Activated T-helper 1 cell treated with anti-CD3 and anti-CD28 coated beads, Interleukin-12 subunit alpha, Interleukin-12 subunit beta, Interleukin-2, Interleukin-4 antibody, amounts not matched to agents 30 ng/mL and 10 ng/mL and 1 ng/mL, durations not matched to agents 14 hours and 24 hours and 36 hours (primary cell): ENCODE measurements at regions of chr6 and their contacts with region 1.

Region 1: GRCh38 chr6:119078376-119079282 is at the start of gene FAM184A:
- DNase-seq: peak; percentile 73
- H3K4me3 Mint-ChIP-seq: peak within 1 kb of the TSS; percentile 92
- H3K27ac Mint-ChIP-seq: peak within 1 kb of the TSS; percentile 91
- H3K4me1 Mint-ChIP-seq: peaks cover 43% of the 10 kb centered on the region
- H3K27me3 Mint-ChIP-seq: peaks cover 8% of the 10 kb centered on the region
- total RNA-seq, gene FAM184A: 9.0 and 9.4 TPM in 2 replicates

Region 2: GRCh38 chr6:117547688-117548621 is 1530.7 kb before region 1 on chr6:
- intact Hi-C with region 1: loop called (anchors 5 kb)
- DNase-seq: peak; percentile 26
- H3K4me3 Mint-ChIP-seq: peak overlapping the region; percentile 77
- H3K27ac Mint-ChIP-seq: peak overlapping the region; percentile 12
- H3K4me1 Mint-ChIP-seq: peaks cover 45% of the 10 kb centered on the region
- H3K27me3 Mint-ChIP-seq: peaks cover 10% of the 10 kb centered on the region

Region 3: GRCh38 chr6:118934461-118935330 is 143.9 kb before region 1 on chr6 and contains the start of gene MCM9:
- intact Hi-C with region 1: loop called (anchors 1 kb)
- DNase-seq: peak; percentile 86
- H3K4me3 Mint-ChIP-seq: peak within 1 kb of the TSS; percentile 91
- H3K27ac Mint-ChIP-seq: peak within 1 kb of the TSS; percentile 93
- H3K4me1 Mint-ChIP-seq: peaks cover 40% of the 10 kb centered on the region
- H3K27me3 Mint-ChIP-seq: no peaks in the 10 kb centered on the region
- total RNA-seq, gene MCM9: 19.8 and 24.4 TPM in 2 replicates

Region 4: GRCh38 chr6:119052292-119052889 is 26.2 kb before region 1 on chr6:
- intact Hi-C with region 1: loop called (anchors 1 kb)
- DNase-seq: no peak
- H3K4me3 Mint-ChIP-seq: no peak overlapping the region
- H3K27ac Mint-ChIP-seq: no peak overlapping the region
- H3K4me1 Mint-ChIP-seq: peaks cover 15% of the 10 kb centered on the region
- H3K27me3 Mint-ChIP-seq: peaks cover 2% of the 10 kb centered on the region

Region 5: GRCh38 chr6:119261945-119262286 is 183.3 kb after region 1 on chr6:
- intact Hi-C with region 1: loop called (anchors 5 kb)
- DNase-seq: no peak
- H3K4me3 Mint-ChIP-seq: peak overlapping the region; percentile 46
- H3K27ac Mint-ChIP-seq: peak overlapping the region; percentile 91
- H3K4me1 Mint-ChIP-seq: peaks cover 50% of the 10 kb centered on the region
- H3K27me3 Mint-ChIP-seq: no peaks in the 10 kb centered on the region